Right ventricle myocardium inferior (tissue), 1 donor: ENCODE measurements at regions of chr2 and their contacts with region 1.

Region 1: GRCh38 chr2:237060534-237061312 is 25.0 kb upstream of the COPS8 start:
- DNase-seq: no peak
- ATAC-seq: peak; percentile 67

Region 2: GRCh38 chr2:235779444-235779896 is 1281.3 kb before region 1 on chr2:
- intact Hi-C with region 1: loop called (anchors 10 kb)
- DNase-seq: no peak
- ATAC-seq: peak; percentile 75

Region 3: GRCh38 chr2:236352761-236353593 is 707.7 kb before region 1 on chr2:
- intact Hi-C with region 1: loop called (anchors 1 kb)
- DNase-seq: no peak
- ATAC-seq: no peak

Region 4: GRCh38 chr2:237341872-237342271 is 281.1 kb after region 1 on chr2:
- intact Hi-C with region 1: no loop called
- DNase-seq: no peak
- ATAC-seq: peak; percentile 55